ENCODE measurements at regions of chr20 and their contacts with region 1.

Region 1: GRCh38 chr20:50790651-50791277 is 4.1 kb upstream of the BCAS4 start:
- DNase-seq: peak; percentile 85
- H3K4me3 Mint-ChIP-seq: no peak overlapping the region
- H3K27ac Mint-ChIP-seq: peak overlapping the region; percentile 42
- H3K4me1 Mint-ChIP-seq: peaks cover 22% of the 10 kb centered on the region
- H3K27me3 Mint-ChIP-seq: no peaks in the 10 kb centered on the region

Region 2: GRCh38 chr20:50750145-50750671 is 40.6 kb before region 1 on chr20:
- CTCF ChIA-PET with region 1: interaction called, 16 read pairs
- POLR2A ChIA-PET with region 1: no interaction called
- DNase-seq: no peak
- H3K4me3 Mint-ChIP-seq: no peak overlapping the region
- H3K27ac Mint-ChIP-seq: no peak overlapping the region
- H3K4me1 Mint-ChIP-seq: peaks cover 23% of the 10 kb centered on the region
- H3K27me3 Mint-ChIP-seq: no peaks in the 10 kb centered on the region

Region 3: GRCh38 chr20:50824193-50824632 is 33.4 kb after region 1 on chr20:
- CTCF ChIA-PET with region 1: interaction called, 23 read pairs
- POLR2A ChIA-PET with region 1: no interaction called
- DNase-seq: no peak
- H3K4me3 Mint-ChIP-seq: no peak overlapping the region
- H3K27ac Mint-ChIP-seq: no peak overlapping the region
- H3K4me1 Mint-ChIP-seq: peaks cover 17% of the 10 kb centered on the region
- H3K27me3 Mint-ChIP-seq: no peaks in the 10 kb centered on the region

Region 4: GRCh38 chr20:50862546-50862945 is 71.8 kb after region 1 on chr20:
- CTCF ChIA-PET with region 1: no interaction called
- POLR2A ChIA-PET with region 1: no interaction called
- DNase-seq: no peak
- H3K4me3 Mint-ChIP-seq: no peak overlapping the region
- H3K27ac Mint-ChIP-seq: no peak overlapping the region
- H3K4me1 Mint-ChIP-seq: no peaks in the 10 kb centered on the region
- H3K27me3 Mint-ChIP-seq: no peaks in the 10 kb centered on the region

Region 5: GRCh38 chr20:50913690-50914375 is 123.1 kb after region 1 on chr20:
- CTCF ChIA-PET with region 1: interaction called, 289 read pairs
- POLR2A ChIA-PET with region 1: no interaction called
- DNase-seq: peak; percentile 27
- H3K4me3 Mint-ChIP-seq: no peak overlapping the region
- H3K27ac Mint-ChIP-seq: peak overlapping the region; percentile 63
- H3K4me1 Mint-ChIP-seq: peaks cover 69% of the 10 kb centered on the region
- H3K27me3 Mint-ChIP-seq: no peaks in the 10 kb centered on the region

Region 6: DNA sequence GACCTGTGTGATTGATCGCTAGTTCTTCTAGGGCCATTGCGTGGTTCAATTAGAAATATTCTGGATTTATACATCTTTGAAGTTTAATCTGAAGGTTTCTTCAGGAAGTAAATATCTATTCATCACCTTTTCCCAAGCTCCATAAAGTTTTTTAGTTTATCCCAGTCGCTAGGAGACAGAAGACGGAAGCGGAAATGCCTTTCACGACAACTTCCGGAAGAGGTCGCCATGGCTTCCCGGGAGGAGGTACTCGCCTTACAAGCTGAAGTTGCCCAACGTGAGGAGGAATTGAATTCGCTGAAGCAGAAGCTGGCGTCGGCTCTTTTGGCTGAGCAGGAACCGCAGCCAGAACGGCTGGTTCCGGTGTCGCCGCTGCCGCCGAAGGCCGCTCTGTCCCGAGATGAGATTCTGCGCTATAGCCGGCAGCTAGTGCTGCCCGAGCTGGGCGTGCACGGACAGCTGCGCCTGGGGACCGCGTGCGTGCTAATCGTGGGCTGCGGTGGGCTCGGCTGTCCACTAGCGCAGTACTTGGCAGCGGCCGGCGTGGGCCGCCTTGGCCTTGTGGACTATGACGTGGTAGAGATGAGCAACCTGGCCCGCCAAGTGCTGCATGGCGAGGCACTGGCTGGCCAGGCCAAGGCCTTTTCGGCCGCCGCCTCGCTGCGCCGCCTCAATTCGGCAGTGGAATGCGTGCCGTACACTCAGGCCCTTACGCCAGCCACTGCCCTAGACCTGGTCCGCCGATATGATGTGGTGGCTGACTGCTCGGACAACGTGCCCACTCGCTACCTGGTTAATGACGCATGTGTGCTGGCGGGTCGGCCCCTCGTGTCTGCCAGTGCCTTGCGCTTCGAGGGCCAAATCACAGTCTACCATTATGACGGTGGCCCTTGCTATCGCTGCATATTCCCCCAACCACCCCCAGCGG is 168.1 kb after region 1 on chr20 and contains the start of gene MOCS3:
- CTCF ChIA-PET with region 1: interaction called, 61 read pairs
- POLR2A ChIA-PET with region 1: interaction called, 40 read pairs
- DNase-seq: peak; percentile 85
- H3K4me3 Mint-ChIP-seq: peak within 1 kb of the TSS; percentile 99
- H3K27ac Mint-ChIP-seq: peak within 1 kb of the TSS; percentile 86
- H3K4me1 Mint-ChIP-seq: peaks cover 57% of the 10 kb centered on the region
- H3K27me3 Mint-ChIP-seq: no peaks in the 10 kb centered on the region
- total RNA-seq, gene MOCS3: 4.1 to 4.7 TPM

Region 7: GRCh38 chr20:50987592-50988210 is 196.9 kb after region 1 on chr20:
- CTCF ChIA-PET with region 1: interaction called, 26 read pairs
- POLR2A ChIA-PET with region 1: interaction called, 4 read pairs
- DNase-seq: peak; percentile 54
- H3K4me3 Mint-ChIP-seq: no peak overlapping the region
- H3K27ac Mint-ChIP-seq: no peak overlapping the region
- H3K4me1 Mint-ChIP-seq: peaks cover 2% of the 10 kb centered on the region
- H3K27me3 Mint-ChIP-seq: peaks cover 27% of the 10 kb centered on the region

Measured in activated CD4-positive, alpha-beta memory T cell treated with anti-CD3 and anti-CD28 coated beads, Interleukin-2, amount 10 ng/mL, durations not matched to agents 7 days and 5 days (primary cell).